ENCODE measurements at regions of chr9 and their contacts with region 1.

Region 1: GRCh38 chr9:101893661-101894646 is 155.5 kb upstream of the GRIN3A start:
- DNase-seq: no peak
- H3K4me3 ChIP-seq: no peak overlapping the region
- H3K27ac ChIP-seq: no peak overlapping the region
- H3K4me1 ChIP-seq: no peaks in the 10 kb centered on the region
- H3K27me3 ChIP-seq: no peaks in the 10 kb centered on the region
- CTCF ChIP-seq: no peak

Region 2: DNA sequence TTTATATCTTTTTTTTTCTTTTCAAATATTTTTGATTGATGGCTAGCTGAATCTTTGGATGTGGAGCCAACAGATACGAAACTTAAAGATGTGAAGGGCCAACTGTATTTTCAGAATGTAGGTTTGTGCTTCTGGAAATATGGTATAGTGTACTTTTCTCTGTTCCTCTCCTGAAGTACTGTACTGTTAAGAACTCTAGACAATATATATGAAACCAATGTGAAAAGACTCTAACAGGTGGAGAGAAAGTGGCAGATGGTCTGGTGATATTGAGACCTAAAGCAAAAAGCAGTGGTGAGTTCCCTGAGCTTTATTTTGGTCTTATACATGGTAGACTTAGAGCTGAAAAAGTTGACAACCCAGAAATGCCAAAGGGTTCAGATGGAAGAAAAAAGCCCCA is 29.5 kb after region 1 on chr9:
- dilution Hi-C with region 1: loop called (anchors 5 kb)
- DNase-seq: no peak
- H3K4me3 ChIP-seq: no peak overlapping the region
- H3K27ac ChIP-seq: no peak overlapping the region
- H3K4me1 ChIP-seq: no peaks in the 10 kb centered on the region
- H3K27me3 ChIP-seq: no peaks in the 10 kb centered on the region
- CTCF ChIP-seq: no peak